ACHN (cell line): ENCODE measurements at regions of chr9 and their contacts with region 1.

Region 1: DNA sequence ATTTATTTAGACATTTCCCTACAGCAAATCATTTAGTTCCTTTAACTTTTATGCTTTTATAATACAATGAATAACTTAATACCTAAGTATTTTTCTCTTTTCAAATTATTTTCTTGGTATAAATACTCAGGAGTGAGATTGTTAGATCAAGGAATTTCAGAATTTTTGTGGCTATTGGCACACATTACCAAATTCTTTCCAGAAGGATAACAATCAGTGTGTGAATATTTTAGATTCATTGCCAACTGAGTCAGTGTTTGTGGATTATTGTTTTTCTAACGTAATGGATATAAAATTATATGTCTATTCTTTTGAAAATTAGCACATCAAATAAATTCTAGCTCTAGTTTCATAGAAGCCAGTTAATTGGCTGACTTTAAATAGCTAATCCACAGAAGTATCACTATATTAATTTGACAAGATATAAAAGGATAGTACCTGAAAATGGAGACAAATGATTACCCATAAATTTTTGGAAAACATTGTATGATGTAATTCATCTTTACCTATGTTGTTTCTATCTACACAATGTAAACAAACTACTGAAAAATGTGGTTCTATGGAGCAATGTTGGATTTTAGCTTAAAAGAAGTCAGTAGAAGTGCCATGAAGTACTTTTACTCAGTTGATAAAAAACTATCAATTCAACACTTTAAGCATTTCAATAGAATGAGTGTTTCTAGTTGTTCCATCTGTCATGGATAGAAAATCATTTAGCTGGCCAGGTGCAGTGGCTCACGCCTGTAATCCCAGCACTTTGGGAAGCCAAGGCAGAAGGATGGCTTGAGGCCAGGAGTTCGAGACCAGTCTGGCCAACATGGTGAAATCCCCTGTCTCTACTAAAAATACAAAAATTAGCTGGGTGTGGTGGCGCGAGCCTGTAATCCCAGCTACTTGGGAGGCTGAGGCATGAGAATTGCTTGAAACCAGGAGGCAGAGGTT is 185.1 kb downstream of the ADAMTSL1 start:
- DNase-seq: peak; percentile 32

Region 2: DNA sequence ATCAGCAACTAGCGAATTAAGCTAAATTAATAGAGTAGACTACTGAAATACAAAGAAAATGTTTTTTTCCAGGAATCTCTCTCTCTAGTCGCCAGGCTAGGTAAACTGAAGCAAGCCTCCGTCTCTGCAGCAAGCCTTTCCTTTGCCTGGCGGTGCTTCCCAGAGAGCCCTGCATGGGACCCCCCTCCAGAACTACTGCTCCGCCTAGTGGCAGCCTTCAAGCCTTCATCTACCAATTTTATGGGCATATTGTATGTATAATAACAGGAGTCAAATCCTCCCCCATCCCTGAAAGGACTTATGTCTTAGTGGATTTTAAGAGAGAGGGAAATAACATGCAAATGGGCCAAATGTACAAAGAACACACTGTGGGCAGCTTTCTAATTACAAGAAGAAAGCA is 132.0 kb after region 1 on chr9:
- in situ Hi-C with region 1: loop called (anchors 25 kb)
- DNase-seq: peak; percentile 31

Region 3: GRCh38 chr9:18920141-18921084 is 261.4 kb after region 1 on chr9:
- in situ Hi-C with region 1: no loop called
- DNase-seq: no peak